WTC11 (cell line): ENCODE measurements at regions of chr6 and their contacts with region 1.

Region 1: GRCh38 chr6:14046476-14047068 is 71.0 kb upstream of the CD83 start:
- DNase-seq: peak; percentile 51
- ATAC-seq: peak; percentile 93
- H3K4me3 Mint-ChIP-seq: no peak overlapping the region
- H3K27ac Mint-ChIP-seq: no peak overlapping the region
- H3K4me1 Mint-ChIP-seq: no peaks in the 10 kb centered on the region
- H3K27me3 Mint-ChIP-seq: peaks cover 30% of the 10 kb centered on the region
- CTCF ChIP-seq: 0 out of 2 replicates have a peak, but pooled peaks have one; percentile 36

Region 2: DNA sequence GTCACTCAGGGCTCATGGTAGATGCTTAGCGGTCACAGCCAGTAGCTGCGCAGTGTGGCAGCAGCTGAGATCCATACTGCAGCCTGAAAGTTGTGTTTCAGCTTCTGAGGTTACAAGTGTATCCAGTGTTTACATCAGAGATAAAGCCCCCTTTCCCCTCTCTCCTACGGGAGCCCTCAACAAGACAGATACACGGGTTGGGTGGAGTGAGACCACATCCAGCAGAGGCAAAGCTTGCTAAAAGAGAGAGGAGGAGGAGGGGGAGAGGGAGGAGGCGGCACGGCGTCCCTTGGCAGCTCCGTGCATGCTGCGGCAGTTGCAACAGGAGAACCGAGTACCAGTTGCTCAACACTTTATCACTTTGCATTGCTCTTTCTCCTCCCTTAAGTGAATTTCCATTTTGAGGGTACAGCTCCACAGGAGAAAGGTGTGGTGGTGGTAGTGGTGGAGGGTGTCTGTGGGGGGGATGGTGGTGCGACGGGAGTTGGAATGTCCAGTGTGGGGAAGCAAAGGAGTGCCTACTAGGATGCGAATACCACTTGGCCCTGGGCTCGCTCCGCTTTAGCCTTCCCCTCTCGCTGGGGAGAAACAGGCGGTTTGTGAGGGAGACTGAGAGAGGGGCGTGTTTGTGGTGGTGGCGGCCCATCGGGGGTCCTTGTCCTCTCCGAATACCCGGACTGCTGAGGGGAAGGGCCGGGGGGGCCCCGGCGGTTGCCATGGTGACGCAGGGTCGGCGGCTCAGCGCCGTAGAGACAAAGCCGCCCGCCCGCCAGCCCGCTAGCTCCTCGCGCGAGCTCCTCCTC is 122.2 kb before region 1 on chr6:
- CTCF ChIA-PET with region 1: interaction called, 22 read pairs
- POLR2A ChIA-PET with region 1: no interaction called
- DNase-seq: peak; percentile 71
- ATAC-seq: peak; percentile 82
- H3K4me3 Mint-ChIP-seq: peak overlapping the region; percentile 86
- H3K27ac Mint-ChIP-seq: peak overlapping the region; percentile 53
- H3K4me1 Mint-ChIP-seq: peaks cover 43% of the 10 kb centered on the region
- H3K27me3 Mint-ChIP-seq: peaks cover 40% of the 10 kb centered on the region
- CTCF ChIP-seq: no peak

Region 3: GRCh38 chr6:14016935-14017625 is 29.5 kb before region 1 on chr6:
- CTCF ChIA-PET with region 1: interaction called, 10 read pairs
- POLR2A ChIA-PET with region 1: no interaction called
- DNase-seq: no peak
- ATAC-seq: no peak; the same call in 1 of the 2 replicates
- H3K4me3 Mint-ChIP-seq: peak overlapping the region; percentile 24
- H3K27ac Mint-ChIP-seq: no peak overlapping the region
- H3K4me1 Mint-ChIP-seq: peaks cover 32% of the 10 kb centered on the region
- H3K27me3 Mint-ChIP-seq: peaks cover 40% of the 10 kb centered on the region
- CTCF ChIP-seq: no peak

Region 4: GRCh38 chr6:14026831-14027539 is 19.6 kb before region 1 on chr6:
- CTCF ChIA-PET with region 1: interaction called, 17 read pairs
- POLR2A ChIA-PET with region 1: no interaction called
- DNase-seq: no peak
- ATAC-seq: no peak
- H3K4me3 Mint-ChIP-seq: no peak overlapping the region
- H3K27ac Mint-ChIP-seq: no peak overlapping the region
- H3K4me1 Mint-ChIP-seq: peaks cover 21% of the 10 kb centered on the region
- H3K27me3 Mint-ChIP-seq: peaks cover 22% of the 10 kb centered on the region
- CTCF ChIP-seq: no peak

Region 5: DNA sequence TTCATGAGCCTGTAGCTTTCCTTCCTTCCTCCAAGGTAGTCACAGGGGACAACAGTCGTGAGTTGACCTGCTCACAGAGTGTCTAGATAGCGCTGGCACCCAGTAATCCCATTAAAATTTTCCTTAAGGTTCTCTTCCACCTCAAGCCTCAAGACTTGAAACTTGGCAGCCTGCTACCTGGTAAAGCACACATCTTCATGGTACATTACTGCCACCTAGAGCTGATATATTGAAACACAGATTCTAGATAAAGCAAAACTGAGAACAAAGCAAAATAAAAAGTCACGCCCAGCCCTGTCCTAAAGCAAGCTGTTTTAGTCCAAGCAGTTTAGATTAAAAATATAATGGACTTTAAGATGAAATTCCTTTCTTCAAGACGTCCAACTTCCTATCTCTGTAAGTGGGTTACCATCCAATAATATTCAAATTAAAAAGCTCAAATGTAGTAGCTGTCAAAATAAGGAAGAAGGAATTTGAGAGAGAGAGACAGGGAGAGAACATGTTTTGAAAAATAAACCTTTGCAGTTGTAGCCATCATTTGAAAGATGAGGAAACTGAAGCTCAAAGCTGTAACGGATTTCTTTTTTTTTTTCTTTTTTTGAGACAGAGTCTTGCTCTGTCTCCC is 20.3 kb after region 1 on chr6:
- CTCF ChIA-PET with region 1: interaction called, 19 read pairs
- POLR2A ChIA-PET with region 1: no interaction called
- DNase-seq: no peak
- ATAC-seq: peak; percentile 88
- H3K4me3 Mint-ChIP-seq: no peak overlapping the region
- H3K27ac Mint-ChIP-seq: no peak overlapping the region
- H3K4me1 Mint-ChIP-seq: no peaks in the 10 kb centered on the region
- H3K27me3 Mint-ChIP-seq: no peaks in the 10 kb centered on the region; the same call in 1 of the 2 replicates
- CTCF ChIP-seq: peak; percentile 37; the same call in 1 of the 2 replicates

Region 6: DNA sequence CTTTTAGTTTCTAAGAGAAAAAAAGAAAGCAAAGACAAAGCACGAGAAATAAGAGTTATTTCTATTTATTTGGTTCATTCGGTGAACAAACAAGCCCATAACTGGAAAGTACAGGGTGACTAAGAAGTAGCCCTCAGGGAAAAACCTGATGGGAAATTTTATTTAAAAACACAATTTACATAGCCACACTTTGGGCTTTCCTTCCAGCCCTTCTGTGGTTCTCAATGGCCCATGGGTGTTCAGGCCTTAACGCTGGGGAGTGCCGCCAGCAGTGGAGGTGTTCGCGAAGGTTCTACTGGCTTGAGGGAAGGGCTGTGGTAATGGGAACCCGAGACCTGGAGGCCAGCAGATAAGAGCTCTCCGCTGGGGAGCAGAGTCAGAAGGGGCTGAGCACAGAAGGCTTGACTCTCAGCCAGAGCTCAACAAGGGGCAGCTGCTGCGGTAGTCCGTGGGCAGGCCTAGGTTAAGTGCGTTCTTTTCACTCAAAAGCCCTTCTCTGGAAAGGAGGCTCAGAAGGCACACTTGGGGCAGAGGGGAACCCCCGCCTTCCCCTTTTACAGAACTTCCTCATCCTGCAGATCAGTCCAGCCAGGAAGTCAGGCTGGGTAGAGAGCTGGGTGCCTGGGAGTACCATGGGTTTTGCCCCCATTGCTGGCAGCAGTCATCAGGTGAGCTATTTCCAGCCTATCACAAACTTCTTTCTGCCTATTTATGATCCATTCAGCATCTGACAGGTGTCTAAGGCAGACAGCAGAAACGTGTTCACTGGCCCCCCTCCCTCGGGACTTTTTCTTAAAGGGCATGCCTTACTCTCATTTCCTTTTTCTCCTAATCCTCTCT is 62.2 kb after region 1 on chr6:
- CTCF ChIA-PET with region 1: no interaction called
- POLR2A ChIA-PET with region 1: no interaction called
- DNase-seq: no peak
- ATAC-seq: no peak
- H3K4me3 Mint-ChIP-seq: no peak overlapping the region
- H3K27ac Mint-ChIP-seq: no peak overlapping the region
- H3K4me1 Mint-ChIP-seq: no peaks in the 10 kb centered on the region
- H3K27me3 Mint-ChIP-seq: peaks cover 16% of the 10 kb centered on the region
- CTCF ChIP-seq: no peak

Region 7: DNA sequence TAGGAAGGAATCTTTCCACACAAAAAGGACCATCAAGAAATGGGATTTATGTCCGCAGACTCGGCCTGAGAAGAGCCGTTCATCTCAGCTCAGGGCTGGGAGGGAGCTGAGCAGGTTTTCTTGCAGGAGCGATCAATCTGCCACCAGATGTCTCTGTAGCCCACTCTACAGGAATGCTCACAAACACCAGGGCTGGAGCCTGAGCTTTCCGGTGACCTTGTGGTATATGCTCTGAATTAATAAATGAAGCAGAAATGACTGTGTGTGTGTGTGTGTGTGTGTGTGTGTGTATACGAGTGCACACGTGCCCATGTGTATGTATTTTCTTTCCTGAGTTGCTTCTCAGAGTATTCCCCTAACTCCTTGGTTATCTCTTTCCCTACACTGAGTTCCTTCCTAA is 83.0 kb after region 1 on chr6:
- CTCF ChIA-PET with region 1: interaction called, 12 read pairs
- POLR2A ChIA-PET with region 1: no interaction called
- DNase-seq: peak; percentile 55
- ATAC-seq: peak; percentile 97
- H3K4me3 Mint-ChIP-seq: no peak overlapping the region
- H3K27ac Mint-ChIP-seq: no peak overlapping the region
- H3K4me1 Mint-ChIP-seq: peaks cover 30% of the 10 kb centered on the region
- H3K27me3 Mint-ChIP-seq: no peaks in the 10 kb centered on the region; the same call in 1 of the 2 replicates
- CTCF ChIP-seq: no peak